GM10248 (cell line): ENCODE measurements at regions of chr17 and their contacts with region 1.

Region 1: DNA sequence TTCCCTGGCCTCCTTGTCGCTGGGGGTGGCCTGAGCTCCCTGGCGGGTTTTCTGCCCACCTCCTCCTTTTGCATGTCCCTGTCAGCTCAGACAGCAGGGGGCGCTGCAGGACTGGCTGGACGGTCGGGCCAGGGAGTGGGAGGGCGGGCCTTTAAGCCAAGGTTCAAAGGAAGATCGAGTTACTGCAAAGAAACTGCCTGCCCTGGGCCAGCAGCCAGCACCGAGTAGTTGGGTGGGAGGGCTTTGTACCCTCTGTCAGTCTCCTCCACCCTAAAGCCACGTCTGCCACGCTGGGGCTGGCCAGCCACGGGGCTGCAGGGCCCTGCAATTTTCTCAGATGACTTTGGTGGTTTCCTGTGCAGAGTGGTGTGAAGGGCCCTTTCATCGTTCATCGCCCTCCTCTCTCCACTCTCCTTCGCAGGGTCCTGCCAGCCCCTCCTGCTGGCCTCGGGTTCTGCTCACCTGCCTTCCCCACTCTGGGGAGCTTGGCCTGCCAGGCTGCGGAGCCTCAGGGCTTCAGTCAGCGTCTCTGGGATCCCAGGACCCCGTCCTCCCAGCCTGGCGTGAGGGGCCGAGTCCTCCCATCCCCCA is 12.3 kb downstream of the GPR142 start:
- DNase-seq: peak; percentile 92
- CTCF ChIP-seq: peak; percentile 97

Region 2: GRCh38 chr17:74394977-74395376 is 15.4 kb after region 1 on chr17:
- CTCF ChIA-PET with region 1: interaction called, 43 read pairs
- POLR2A ChIA-PET with region 1: no interaction called
- DNase-seq: no peak
- CTCF ChIP-seq: no peak

Region 3: DNA sequence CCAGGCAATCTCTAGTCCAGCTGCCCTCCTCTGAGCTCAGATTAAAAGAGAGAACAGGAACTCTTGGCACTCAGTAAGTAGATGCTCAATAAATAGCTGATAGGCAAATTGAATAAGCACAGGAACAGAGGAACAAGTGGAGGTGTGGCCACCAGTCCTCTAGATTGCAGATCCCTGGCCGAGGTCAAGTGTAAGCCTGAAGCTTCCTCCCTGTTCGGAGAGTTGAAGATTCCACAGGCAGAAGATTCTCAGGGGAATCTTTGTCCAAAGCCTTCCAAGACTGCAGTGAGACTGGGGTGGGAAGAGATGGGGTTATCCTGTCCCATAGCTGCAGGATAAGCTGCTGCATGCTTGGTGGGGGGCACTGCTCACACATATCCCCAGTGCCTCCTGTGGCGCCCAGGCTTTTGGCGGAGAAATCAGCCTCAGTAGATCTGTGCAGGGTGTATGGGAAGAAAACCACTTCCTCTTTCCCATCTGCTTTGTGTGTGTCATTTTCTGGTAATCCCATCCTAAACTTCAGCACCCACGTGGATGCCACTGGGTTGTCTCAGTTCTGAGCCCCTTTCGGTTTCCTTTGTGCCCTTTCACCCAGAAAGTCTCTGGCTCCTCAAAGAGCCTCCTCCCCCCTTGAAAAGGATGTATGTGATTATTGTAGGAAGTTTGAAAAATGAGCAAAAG is 99.0 kb after region 1 on chr17:
- CTCF ChIA-PET with region 1: interaction called, 13 read pairs
- POLR2A ChIA-PET with region 1: no interaction called
- DNase-seq: peak; percentile 45
- CTCF ChIP-seq: no peak

Region 4: GRCh38 chr17:74528491-74529199 is 149.1 kb after region 1 on chr17:
- CTCF ChIA-PET with region 1: interaction called, 68 read pairs
- POLR2A ChIA-PET with region 1: no interaction called
- DNase-seq: peak; percentile 77
- CTCF ChIP-seq: no peak